ENCODE measurements at regions of chr9 and their contacts with region 1.

Region 1: GRCh38 chr9:117028103-117028858 is 341.2 kb downstream of the TRIM32 start:
- DNase-seq: no peak
- CTCF ChIP-seq: no peak

Region 2: DNA sequence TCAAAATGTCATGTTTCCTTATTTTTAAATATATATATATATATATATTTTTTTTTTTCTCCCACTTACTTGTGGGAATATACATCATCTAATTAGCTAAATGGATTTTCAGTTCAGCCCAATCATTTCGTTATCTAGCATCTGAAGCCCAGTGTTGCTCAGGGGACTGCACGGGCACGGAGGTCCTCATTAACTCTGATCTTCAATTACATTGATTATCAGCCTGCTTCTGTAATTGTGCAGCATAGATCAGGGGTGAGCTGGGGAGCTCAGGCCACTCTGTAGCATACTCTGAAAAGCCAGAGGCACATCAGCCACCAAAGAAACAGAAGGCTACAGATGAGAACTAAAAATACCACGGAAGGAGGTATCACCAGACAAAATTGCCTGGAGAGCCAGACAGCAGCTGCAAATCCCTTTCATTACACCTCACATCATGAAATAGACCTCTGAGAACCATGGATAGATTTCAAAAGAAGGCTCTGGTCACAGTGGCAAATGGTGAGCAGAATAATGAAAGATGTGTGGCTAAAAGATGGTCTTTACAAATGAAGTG is 14.8 kb before region 1 on chr9:
- CTCF ChIA-PET with region 1: interaction called, 24 read pairs
- POLR2A ChIA-PET with region 1: no interaction called
- DNase-seq: no peak
- CTCF ChIP-seq: no peak

Measured in GM10248 (cell line).